Activated naive CD8-positive, alpha-beta T cell treated with anti-CD3 and anti-CD28 coated beads, Interleukin-2, amount 10 ng/mL, durations not matched to agents 7 days and 5 days (primary cell): ENCODE measurements at regions of chr21 and their contacts with region 1.

Region 1: DNA sequence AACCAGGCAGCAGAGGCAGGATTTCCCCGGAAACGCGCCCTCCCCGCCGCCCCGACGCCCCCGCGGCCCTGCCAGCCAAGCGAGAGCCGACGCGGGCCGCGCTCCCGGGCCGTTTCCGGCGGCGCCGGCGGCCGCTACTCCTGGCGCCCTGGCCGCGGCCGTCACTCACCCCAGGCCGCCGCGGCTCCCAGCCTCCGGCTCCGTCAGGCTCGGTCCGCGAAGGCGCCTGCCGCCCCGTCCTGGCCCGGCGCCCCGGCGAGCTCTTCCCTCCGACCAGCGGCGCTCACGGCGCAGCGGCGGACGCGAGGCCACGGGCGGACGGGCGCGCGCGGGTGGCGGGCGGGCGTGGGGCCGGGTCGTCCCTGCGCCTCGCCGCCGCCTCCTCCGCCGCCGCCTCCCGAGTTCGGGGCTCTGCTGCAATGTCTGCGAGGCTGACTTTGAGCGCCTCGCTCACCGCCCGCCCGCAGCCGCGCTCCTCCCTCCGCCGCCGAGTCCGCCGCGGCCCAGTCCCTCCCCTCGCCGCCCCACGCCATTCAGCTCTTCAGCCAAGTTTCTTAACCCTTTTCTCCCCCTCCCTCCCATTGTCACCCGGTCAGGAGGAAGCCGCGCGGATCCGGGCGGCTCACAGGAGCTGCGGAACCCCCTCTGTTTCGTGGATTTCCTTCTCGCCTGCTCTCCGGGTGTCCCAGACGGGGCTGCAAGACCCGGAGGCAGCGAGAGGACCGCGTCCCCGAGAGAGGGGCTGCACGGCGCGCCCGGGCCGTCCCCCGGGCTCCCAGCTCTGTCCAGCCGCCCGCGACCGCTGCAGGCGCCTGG is at the start of gene NRIP1:
- DNase-seq: peak; percentile 89
- ATAC-seq: peak; percentile 82
- H3K4me3 Mint-ChIP-seq: peak within 1 kb of the TSS; percentile 99
- H3K27ac Mint-ChIP-seq: peak within 1 kb of the TSS; percentile 99
- H3K4me1 Mint-ChIP-seq: peaks cover 39% of the 10 kb centered on the region
- H3K27me3 Mint-ChIP-seq: peaks cover 9% of the 10 kb centered on the region
- total RNA-seq, gene NRIP1: 22.7 to 27.3 TPM

Region 2: DNA sequence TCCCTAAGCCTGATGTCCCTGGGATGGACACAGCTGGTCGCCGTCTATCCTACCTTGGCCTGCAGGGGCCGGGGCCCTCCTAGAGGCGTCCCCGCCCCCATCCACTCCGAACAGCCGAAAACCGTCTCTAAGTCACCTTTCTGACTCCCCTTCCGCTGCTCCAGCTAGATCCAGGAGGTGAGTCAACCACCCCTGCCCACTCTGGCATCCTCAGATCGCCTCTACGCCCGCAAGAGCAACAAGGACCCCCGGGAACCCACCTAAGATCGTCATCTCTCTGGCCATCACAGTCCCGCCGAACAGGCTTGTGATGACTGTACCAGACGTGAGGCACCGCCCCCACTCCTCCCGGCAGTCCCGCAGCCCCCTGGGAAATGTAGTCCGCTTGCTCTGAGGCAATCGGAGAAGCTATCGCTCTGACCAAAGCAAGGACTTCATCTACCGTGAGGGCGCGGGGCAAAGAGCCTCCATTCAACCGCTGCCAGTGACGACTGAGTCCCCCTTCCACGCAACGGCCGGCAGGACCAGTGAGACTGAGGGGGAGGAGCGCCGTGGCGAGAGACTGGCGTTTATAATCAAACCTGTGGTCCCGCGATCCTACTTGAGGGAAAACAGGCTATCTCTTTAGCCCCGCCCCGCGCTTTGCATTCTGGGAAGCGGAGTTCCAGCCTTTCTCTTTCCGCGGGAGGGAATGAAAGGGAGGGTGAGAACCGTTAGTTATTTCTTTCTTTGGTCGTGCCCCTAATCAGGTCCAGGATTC is 681.8 kb before region 1 on chr21 and contains the start of gene HSPA13:
- POLR2A ChIA-PET with region 1: interaction called, 15 read pairs
- DNase-seq: peak; percentile 95
- ATAC-seq: peak; percentile 99
- H3K4me3 Mint-ChIP-seq: peak within 1 kb of the TSS; percentile 98
- H3K27ac Mint-ChIP-seq: peak within 1 kb of the TSS; percentile 98
- H3K4me1 Mint-ChIP-seq: peaks cover 32% of the 10 kb centered on the region
- H3K27me3 Mint-ChIP-seq: no peaks in the 10 kb centered on the region
- total RNA-seq, gene HSPA13: 21.4 to 24.1 TPM

Region 3: DNA sequence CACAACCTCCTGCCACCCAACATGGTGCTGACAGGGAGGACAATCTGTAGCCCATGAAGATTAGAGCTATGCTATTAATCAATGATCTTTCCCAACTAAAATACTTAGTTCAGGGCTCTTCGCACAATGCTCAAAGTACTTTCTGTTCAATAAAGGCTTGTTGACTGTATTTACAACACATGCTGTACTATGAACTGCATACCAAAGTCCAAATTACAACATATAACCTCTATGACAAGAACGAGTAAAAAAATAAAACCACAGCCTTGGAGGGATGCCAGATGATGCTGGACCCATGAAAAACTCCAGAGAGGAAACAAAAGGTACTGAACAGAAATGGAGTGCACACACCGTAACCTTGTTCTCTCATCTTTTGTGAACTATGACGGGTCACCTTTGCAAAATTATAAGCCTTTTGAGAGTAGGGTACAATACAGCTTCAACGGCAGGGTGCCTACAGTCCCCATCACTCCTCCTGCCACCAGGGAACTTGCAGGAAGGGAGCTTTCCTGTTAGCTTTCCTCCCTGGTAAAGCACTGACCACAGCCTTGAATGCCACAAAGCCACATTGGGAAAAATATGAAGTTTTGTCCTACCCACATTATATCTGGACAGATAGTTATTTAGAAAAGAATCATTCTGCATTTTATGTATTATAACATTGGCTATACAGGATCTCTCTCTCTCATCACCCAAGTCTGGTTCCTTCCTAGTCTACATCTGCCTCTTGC is 175.5 kb before region 1 on chr21:
- POLR2A ChIA-PET with region 1: no interaction called
- DNase-seq: no peak
- ATAC-seq: no peak
- H3K4me3 Mint-ChIP-seq: no peak overlapping the region
- H3K27ac Mint-ChIP-seq: no peak overlapping the region
- H3K4me1 Mint-ChIP-seq: peaks cover 2% of the 10 kb centered on the region
- H3K27me3 Mint-ChIP-seq: no peaks in the 10 kb centered on the region

Region 4: GRCh38 chr21:15051644-15052458 is 12.9 kb before region 1 on chr21:
- POLR2A ChIA-PET with region 1: interaction called, 50 read pairs
- DNase-seq: no peak
- ATAC-seq: peak; percentile 56
- H3K4me3 Mint-ChIP-seq: peak overlapping the region; percentile 76
- H3K27ac Mint-ChIP-seq: peak overlapping the region; percentile 78
- H3K4me1 Mint-ChIP-seq: peaks cover 50% of the 10 kb centered on the region
- H3K27me3 Mint-ChIP-seq: no peaks in the 10 kb centered on the region

Region 5: DNA sequence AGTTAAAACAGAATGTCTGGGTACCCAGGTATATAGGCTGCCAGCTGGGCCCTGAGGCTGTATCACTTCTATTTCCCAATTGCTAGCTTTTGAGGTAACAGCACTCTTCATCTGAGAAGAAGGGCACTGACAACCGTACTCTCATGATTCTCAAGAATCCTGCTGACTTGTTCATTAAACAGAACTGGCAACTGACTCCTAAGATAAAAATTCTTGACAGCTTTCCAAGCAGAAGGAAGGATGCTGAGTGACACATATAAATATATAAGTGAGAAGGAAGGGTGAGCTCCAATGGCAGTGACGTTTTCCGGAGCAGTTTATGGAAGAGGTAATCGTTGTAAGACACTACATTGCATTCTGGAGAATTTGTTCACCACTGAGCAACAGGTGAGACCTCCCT is 48.1 kb after region 1 on chr21:
- POLR2A ChIA-PET with region 1: no interaction called
- DNase-seq: no peak
- ATAC-seq: no peak
- H3K4me3 Mint-ChIP-seq: no peak overlapping the region
- H3K27ac Mint-ChIP-seq: no peak overlapping the region
- H3K4me1 Mint-ChIP-seq: no peaks in the 10 kb centered on the region
- H3K27me3 Mint-ChIP-seq: peaks cover 3% of the 10 kb centered on the region